CD4-positive, alpha-beta T cell (primary cell): ENCODE measurements at regions of chr3 and their contacts with region 1.

Region 1: GRCh38 chr3:68049776-68050175 is 395.4 kb upstream of the SUCLG2 start:
- DNase-seq: no peak
- ATAC-seq: no peak
- H3K4me3 ChIP-seq: no peak overlapping the region
- H3K4me3 Mint-ChIP-seq: no peak overlapping the region
- H3K27ac ChIP-seq: no peak overlapping the region
- H3K27ac Mint-ChIP-seq: no peak overlapping the region
- H3K4me1 ChIP-seq: no peaks in the 10 kb centered on the region
- H3K4me1 Mint-ChIP-seq: peaks cover 21% of the 10 kb centered on the region
- H3K27me3 ChIP-seq: no peaks in the 10 kb centered on the region
- H3K27me3 Mint-ChIP-seq: no peaks in the 10 kb centered on the region
- CTCF ChIP-seq: no peak

Region 2: GRCh38 chr3:68007621-68008226 is 42.1 kb before region 1 on chr3:
- CTCF ChIA-PET with region 1: no interaction called
- POLR2A ChIA-PET with region 1: interaction called, 3 read pairs
- intact Hi-C with region 1: loop called in 1 of 2 experiments (anchors 5 kb)
- DNase-seq: peak; percentile 7 to 57 (median 20)
- ATAC-seq: peak; percentile 80
- H3K4me3 ChIP-seq: peak overlapping the region; percentile 61
- H3K4me3 Mint-ChIP-seq: peak overlapping the region; percentile 91
- H3K27ac ChIP-seq: no peak overlapping the region
- H3K27ac Mint-ChIP-seq: no peak overlapping the region
- H3K4me1 ChIP-seq: peaks cover 18% of the 10 kb centered on the region
- H3K4me1 Mint-ChIP-seq: peaks cover 25% of the 10 kb centered on the region
- H3K27me3 ChIP-seq: peaks cover 0 to 7% of the 10 kb centered on the region in 2 experiments
- H3K27me3 Mint-ChIP-seq: peaks cover 55% of the 10 kb centered on the region
- CTCF ChIP-seq: no peak

Region 3: GRCh38 chr3:68173012-68173634 is 123.3 kb after region 1 on chr3:
- CTCF ChIA-PET with region 1: no interaction called
- POLR2A ChIA-PET with region 1: no interaction called
- intact Hi-C with region 1: no loop called
- DNase-seq: no peak
- ATAC-seq: no peak
- H3K4me3 ChIP-seq: no peak overlapping the region
- H3K4me3 Mint-ChIP-seq: no peak overlapping the region
- H3K27ac ChIP-seq: no peak overlapping the region
- H3K27ac Mint-ChIP-seq: no peak overlapping the region
- H3K4me1 ChIP-seq: no peaks in the 10 kb centered on the region
- H3K4me1 Mint-ChIP-seq: no peaks in the 10 kb centered on the region
- H3K27me3 ChIP-seq: no peaks in the 10 kb centered on the region
- H3K27me3 Mint-ChIP-seq: no peaks in the 10 kb centered on the region
- CTCF ChIP-seq: no peak